Mammary epithelial cell (primary cell): ENCODE measurements at regions of chr10 and their contacts with region 1.

Region 1: GRCh38 chr10:6721480-6721879 is 141.4 kb upstream of the PRKCQ start:
- DNase-seq: peak; percentile 84
- H3K4me3 ChIP-seq: peak overlapping the region in 2 of 3 experiments; percentile 17 to 29
- H3K27ac ChIP-seq: peak overlapping the region; percentile 93
- H3K4me1 ChIP-seq: peaks cover 20% of the 10 kb centered on the region
- H3K27me3 ChIP-seq: no peaks in the 10 kb centered on the region
- CTCF ChIP-seq: peak; percentile 39 to 66

Region 2: DNA sequence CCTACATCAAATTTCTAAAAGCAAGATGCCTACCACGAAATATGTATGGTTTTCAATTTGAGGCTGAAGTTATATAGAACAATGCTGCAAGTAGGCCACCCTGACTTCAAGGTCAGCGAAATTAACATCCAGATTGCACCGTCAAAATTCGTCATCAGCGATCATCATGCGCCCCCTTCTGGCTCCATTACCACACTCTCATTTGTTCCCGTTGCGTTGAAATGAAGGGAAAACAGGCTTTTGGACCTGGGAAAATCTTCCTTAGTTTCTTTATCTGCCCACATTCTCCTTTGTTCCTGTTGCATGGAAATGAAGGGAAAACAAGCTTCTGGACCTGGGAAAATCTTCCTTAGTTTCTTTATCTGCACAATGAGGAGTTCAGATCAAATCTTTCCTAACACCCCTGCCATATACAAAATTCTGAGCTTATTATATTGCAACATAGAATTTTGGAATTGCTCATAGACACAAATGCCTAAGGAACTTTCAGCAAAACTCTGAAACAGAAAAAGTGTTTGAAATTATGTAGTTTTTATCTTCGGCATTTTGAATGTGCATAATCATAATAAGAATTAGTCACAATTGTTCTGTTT is 43.2 kb before region 1 on chr10:
- CTCF ChIA-PET with region 1: no interaction called
- dilution Hi-C with region 1: no loop called
- in situ Hi-C with region 1: no loop called
- intact Hi-C with region 1: no loop called
- DNase-seq: peak; percentile 12
- H3K4me3 ChIP-seq: no peak overlapping the region
- H3K27ac ChIP-seq: no peak overlapping the region
- H3K4me1 ChIP-seq: no peaks in the 10 kb centered on the region
- H3K27me3 ChIP-seq: no peaks in the 10 kb centered on the region
- CTCF ChIP-seq: peak; percentile 17 to 34

Region 3: DNA sequence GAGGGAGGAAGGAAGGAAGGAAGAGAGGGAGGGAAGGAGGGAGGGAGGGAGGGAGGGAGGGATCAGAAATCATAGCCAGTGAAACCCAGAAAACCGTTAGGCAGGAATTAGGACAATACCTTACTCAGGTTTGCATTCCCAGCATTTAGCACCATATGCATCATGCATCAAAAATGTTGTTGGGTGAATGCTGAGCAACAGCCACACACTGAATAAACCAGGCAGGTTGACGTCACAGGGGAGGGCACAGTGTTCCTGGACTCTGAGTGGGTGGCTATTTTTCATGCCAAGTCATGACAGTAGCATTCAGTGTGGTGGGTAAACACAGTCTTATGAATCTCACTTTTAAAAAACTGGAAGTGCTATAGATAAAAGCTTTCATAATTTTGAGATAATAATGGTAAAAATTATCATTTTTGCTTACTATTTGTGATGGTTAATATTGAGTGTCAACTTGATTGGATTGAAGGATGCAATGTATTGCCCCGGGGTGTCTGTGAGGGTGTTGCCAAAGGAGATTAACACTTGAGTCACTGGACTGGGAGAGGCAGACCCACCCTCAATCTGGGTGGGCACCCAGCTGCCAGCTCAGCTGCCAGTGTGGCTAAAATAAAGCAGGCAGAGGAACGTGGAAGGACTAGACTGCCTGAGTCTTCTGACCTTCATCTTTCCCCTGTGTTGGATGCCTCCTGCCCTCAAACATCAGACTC is 57.7 kb after region 1 on chr10:
- CTCF ChIA-PET with region 1: no interaction called
- dilution Hi-C with region 1: loop called (anchors 5 kb)
- in situ Hi-C with region 1: loop called in 1 of 2 experiments (anchors 10 kb)
- intact Hi-C with region 1: loop called (anchors 1 kb)
- DNase-seq: peak; percentile 99
- H3K4me3 ChIP-seq: peak overlapping the region in 2 of 3 experiments; percentile 43 to 54
- H3K27ac ChIP-seq: peak overlapping the region; percentile 98
- H3K4me1 ChIP-seq: peaks cover 33% of the 10 kb centered on the region
- H3K27me3 ChIP-seq: no peaks in the 10 kb centered on the region
- CTCF ChIP-seq: no peak

Region 4: DNA sequence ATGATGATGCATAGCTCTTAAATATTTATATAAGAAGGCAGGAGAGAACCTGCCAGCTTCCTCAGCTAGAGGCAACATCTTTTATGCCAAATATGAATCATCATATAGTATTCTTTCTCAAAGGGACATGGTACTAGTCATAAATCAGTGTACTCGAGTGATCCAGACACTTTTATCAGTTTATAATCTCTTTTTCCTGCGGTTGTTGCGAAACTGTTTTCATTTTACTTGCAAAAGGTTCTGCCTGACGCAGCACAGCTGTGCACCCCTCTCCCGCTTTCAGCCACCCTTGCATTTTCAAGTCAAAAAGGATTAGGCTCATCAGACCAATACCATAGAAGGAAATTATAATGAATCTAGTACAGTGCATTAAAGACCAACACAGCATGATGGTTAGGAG is 190.9 kb after region 1 on chr10:
- CTCF ChIA-PET with region 1: interaction called, 3 read pairs
- dilution Hi-C with region 1: no loop called
- in situ Hi-C with region 1: loop called in 1 of 2 experiments (anchors 10 kb)
- intact Hi-C with region 1: loop called (anchors 2 kb)
- DNase-seq: peak; percentile 92
- H3K4me3 ChIP-seq: no peak overlapping the region
- H3K27ac ChIP-seq: no peak overlapping the region
- H3K4me1 ChIP-seq: peaks cover 13% of the 10 kb centered on the region
- H3K27me3 ChIP-seq: peaks cover 13% of the 10 kb centered on the region
- CTCF ChIP-seq: no peak

Region 5: DNA sequence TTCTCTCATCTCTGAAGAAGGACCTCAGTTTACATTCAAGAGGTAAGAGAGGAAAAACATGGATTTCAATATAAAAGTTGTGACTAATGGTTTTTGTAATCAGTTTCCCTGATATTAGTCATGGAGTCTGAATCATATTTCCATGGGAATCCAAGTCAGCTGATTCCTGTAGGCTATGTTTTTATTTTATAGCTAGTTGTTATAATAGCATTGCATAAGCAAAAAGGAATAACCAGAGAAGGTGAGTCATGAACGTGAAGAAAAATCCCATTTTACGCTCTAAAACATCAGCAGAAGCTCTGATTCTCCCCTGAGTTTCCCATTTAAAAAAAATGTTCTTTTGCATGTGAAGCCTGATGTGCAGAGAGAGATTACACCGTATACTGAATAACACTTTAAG is 390.1 kb after region 1 on chr10:
- CTCF ChIA-PET with region 1: no interaction called
- dilution Hi-C with region 1: no loop called
- in situ Hi-C with region 1: no loop called
- intact Hi-C with region 1: loop called (anchors 10 kb)
- DNase-seq: peak; percentile 86
- H3K4me3 ChIP-seq: no peak overlapping the region
- H3K27ac ChIP-seq: no peak overlapping the region
- H3K4me1 ChIP-seq: no peaks in the 10 kb centered on the region
- H3K27me3 ChIP-seq: no peaks in the 10 kb centered on the region
- CTCF ChIP-seq: no peak

Region 6: DNA sequence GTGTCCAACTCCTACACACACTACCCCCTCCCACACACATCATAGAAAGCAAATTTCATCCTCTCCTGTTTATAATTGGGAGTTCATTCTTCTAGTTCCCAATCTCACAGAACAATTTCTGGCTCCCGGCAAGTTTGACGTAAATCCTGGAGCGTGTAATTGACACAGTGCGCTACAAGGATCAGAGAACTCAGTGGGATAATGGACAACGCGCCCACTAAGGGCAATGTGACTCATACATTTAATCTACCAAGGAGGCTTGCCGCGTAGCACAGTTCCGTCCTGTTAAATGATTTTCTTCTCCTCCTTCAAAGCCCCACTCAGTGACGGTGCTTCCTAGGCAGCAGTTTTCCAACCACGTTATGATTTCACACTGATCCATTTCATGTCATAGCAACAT is 411.8 kb after region 1 on chr10:
- CTCF ChIA-PET with region 1: no interaction called
- dilution Hi-C with region 1: no loop called
- in situ Hi-C with region 1: no loop called
- intact Hi-C with region 1: no loop called
- DNase-seq: no peak
- H3K4me3 ChIP-seq: no peak overlapping the region
- H3K27ac ChIP-seq: no peak overlapping the region
- H3K4me1 ChIP-seq: no peaks in the 10 kb centered on the region
- H3K27me3 ChIP-seq: no peaks in the 10 kb centered on the region
- CTCF ChIP-seq: no peak

Region 7: DNA sequence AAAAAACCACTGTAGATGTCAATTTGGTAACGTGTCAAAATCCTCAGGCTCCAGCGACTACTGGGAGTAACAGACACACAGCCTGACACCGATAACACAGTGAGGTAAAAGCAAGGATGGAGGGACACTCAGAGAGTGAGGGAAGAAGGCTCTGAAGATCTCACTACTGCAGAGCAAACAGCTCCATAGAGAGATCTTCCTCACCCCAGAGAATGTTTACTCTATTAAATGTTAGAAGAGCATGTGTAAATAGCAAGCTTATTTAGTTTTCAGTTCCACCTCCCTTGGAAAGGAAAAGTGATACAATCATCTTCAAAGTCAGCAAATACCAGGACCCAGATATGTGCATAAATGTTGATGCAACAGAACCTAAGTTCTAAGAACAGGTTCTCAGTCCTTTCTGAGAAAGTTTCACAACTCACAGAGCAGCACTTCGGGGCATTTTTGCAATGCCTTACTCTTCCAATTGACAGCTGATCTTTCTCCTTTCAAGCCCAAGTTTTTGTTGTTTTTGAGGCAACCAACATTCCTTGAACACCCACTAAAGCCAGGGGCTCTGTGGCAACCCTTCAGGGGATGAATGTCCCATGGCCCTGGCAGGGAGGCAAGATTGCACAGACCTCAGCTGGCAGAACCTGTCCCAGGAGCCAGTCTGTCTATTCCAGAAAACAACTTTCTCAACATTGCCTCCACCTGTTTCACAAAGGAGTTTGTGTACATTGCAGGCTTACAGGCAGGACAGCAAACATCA is 512.0 kb after region 1 on chr10:
- CTCF ChIA-PET with region 1: no interaction called
- dilution Hi-C with region 1: no loop called
- in situ Hi-C with region 1: no loop called
- intact Hi-C with region 1: no loop called
- DNase-seq: peak; percentile 14
- H3K4me3 ChIP-seq: no peak overlapping the region
- H3K27ac ChIP-seq: no peak overlapping the region
- H3K4me1 ChIP-seq: no peaks in the 10 kb centered on the region
- H3K27me3 ChIP-seq: no peaks in the 10 kb centered on the region
- CTCF ChIP-seq: no peak